ENCODE measurements at regions of chr5 and their contacts with region 1.

Region 1: DNA sequence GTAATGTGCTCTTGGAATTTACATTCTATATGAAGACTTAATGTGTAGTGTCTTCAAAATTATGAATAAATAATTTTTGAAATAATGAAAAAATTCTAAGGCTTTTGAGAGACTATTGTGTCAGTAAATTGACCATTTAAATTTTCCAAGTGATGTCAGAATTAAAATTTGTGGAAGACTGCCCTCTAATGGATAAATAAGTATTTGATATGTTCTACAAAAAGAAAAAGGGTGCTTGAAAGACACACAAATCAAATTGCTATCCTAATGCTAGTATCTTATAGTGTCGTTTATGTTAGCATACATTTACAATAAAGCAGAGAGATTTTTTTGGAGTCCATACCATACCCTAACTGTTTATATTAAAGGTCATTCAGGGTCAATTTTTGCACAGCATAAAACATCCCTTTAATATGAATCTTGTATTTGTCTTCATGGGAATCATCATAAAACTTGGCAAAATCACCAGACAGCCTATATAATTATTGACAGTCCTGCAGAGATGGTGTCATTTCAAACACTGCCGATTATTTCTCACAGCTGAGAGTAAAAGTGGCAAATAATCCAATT is 120.8 kb upstream of the SLC27A6 start:
- DNase-seq: peak; percentile 46
- H3K4me3 Mint-ChIP-seq: no peak overlapping the region
- H3K27ac Mint-ChIP-seq: no peak overlapping the region
- H3K4me1 Mint-ChIP-seq: no peaks in the 10 kb centered on the region
- H3K27me3 Mint-ChIP-seq: no peaks in the 10 kb centered on the region
- CTCF ChIP-seq: peak; percentile 59

Region 2: DNA sequence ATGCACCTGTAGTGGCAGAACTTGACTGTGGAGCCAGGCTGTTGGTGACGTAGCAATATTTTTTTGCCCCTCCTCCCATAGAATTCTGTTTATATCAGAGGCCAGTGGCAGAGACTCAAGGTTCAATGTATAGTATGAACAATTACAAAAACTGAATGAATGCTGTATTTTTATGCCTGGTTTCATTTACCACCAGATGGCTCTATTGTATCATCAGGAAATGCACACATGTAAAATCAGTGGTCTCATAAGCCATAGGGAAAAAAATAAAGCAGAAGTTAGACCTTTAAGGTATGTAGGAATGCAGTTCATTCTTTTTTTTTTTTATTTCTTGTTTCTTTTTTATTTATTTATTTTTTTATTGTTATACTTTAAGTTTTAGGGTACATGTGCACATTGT is 1097.7 kb before region 1 on chr5:
- CTCF ChIA-PET with region 1: no interaction called
- POLR2A ChIA-PET with region 1: no interaction called
- intact Hi-C with region 1: loop called (anchors 1 kb)
- DNase-seq: peak; percentile 43
- H3K4me3 Mint-ChIP-seq: no peak overlapping the region
- H3K27ac Mint-ChIP-seq: no peak overlapping the region
- H3K4me1 Mint-ChIP-seq: no peaks in the 10 kb centered on the region
- H3K27me3 Mint-ChIP-seq: peaks cover 25% of the 10 kb centered on the region
- CTCF ChIP-seq: peak; percentile 57

Region 3: GRCh38 chr5:128857076-128857677 is 12.7 kb after region 1 on chr5:
- CTCF ChIA-PET with region 1: interaction called, 17 read pairs
- POLR2A ChIA-PET with region 1: no interaction called
- intact Hi-C with region 1: no loop called
- DNase-seq: no peak
- H3K4me3 Mint-ChIP-seq: no peak overlapping the region
- H3K27ac Mint-ChIP-seq: no peak overlapping the region
- H3K4me1 Mint-ChIP-seq: no peaks in the 10 kb centered on the region
- H3K27me3 Mint-ChIP-seq: peaks cover 29% of the 10 kb centered on the region
- CTCF ChIP-seq: no peak

Region 4: DNA sequence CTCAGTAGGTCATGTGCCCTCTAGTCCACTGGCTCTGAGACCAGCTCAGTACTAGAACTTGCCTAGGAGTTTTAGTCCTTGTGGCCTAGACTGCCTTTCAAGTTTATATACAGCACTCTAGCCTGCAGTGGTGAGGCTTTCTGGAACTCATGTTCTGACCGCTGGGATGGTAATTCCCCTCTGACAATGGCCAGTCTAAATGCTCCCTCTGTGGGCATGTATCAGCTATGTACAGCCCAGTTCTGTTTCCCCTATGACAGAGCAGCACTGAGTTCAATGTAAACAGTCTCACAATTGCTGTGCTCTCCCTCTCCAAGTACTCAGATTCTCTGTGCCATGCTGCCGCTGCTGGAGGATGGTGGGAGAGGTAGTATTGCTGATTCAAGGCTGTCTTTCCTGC is 52.2 kb after region 1 on chr5:
- CTCF ChIA-PET with region 1: no interaction called
- POLR2A ChIA-PET with region 1: no interaction called
- intact Hi-C with region 1: no loop called
- DNase-seq: no peak
- H3K4me3 Mint-ChIP-seq: no peak overlapping the region
- H3K27ac Mint-ChIP-seq: no peak overlapping the region
- H3K4me1 Mint-ChIP-seq: no peaks in the 10 kb centered on the region
- H3K27me3 Mint-ChIP-seq: peaks cover 50% of the 10 kb centered on the region
- CTCF ChIP-seq: no peak

Measured in MCF 10A (cell line).